Cardiac septum (tissue), 1 donor: ENCODE measurements at regions of chr18 and their contacts with region 1.

Region 1: GRCh38 chr18:48342125-48342524 is 67.1 kb downstream of the ZBTB7C start:
- DNase-seq: no peak

Region 2: DNA sequence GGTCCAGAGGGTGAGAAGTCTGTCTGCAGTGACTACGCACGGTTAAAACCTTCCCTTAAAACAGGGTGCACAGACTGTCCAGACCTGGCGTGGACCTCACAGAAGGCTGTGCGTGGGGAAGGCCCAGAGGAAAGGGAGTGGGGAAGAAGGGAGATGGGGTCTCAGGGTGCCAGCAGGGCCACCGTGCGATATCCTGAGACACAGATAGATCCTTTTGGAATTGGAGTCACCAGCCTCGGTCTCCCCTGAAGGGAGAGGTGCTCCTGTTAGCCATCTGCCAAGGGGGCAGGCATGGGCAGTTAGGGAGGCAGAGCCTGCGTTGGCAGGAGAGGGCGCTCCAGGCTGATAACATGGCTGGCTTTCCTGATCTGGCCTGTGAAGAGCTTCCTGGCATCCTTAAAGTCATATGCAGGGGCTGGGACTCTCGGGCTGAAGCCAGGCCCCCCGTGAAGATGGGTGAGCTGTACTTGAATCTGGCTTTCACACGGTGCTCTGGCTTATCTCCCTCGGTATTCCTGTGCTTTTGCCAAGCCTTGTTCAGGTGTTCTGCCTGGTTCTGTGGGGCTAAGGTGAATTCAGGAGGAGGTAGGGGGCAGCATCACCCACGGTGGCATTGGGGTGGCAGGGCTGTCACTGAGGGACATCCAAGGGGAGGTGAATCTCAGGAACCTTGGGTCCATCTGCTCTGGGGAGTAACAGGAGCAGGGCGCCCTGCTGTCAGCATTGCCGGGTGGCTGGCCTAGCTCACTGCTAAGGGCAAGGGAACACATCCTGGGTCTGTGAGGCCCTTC is 304.4 kb before region 1 on chr18:
- intact Hi-C with region 1: loop called (anchors 5 kb)
- DNase-seq: peak; percentile 76

Region 3: GRCh38 chr18:48385596-48385995 is 43.5 kb after region 1 on chr18:
- intact Hi-C with region 1: loop called (anchors 5 kb)
- DNase-seq: no peak

Region 4: GRCh38 chr18:48580782-48581181 is 238.7 kb after region 1 on chr18:
- intact Hi-C with region 1: no loop called
- DNase-seq: no peak